PC-3 (cell line): ENCODE measurements at regions of chr1 and their contacts with region 1.

Region 1: DNA sequence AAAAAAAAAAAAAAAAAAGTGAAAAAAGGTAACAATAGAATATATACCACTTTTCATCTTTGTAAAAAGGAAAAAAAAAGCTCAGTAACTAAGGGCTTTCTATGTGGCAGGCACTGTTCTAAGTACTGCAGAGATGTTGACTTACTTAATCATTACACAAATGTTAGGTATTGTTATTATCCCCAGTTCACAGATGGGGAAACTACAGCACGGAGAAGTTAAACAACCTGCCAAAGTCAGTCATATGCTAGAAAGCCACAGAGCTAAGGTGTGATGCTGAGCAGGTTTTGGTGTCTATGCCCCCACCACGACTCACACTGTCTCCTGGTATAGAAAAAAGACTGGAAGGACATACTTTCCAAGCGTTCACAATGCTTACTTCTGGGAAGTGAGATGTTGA is 6.6 kb upstream of the PNRC2 start:
- DNase-seq: peak; percentile 62
- ATAC-seq: peak; percentile 55
- H3K4me3 ChIP-seq: no peak overlapping the region
- H3K27ac ChIP-seq: 0 out of 2 replicates have a peak overlapping the region, but pooled peaks have one; percentile 68
- H3K4me1 ChIP-seq: peaks cover 49% of the 10 kb centered on the region
- H3K27me3 ChIP-seq: no peaks in the 10 kb centered on the region
- CTCF ChIP-seq: no peak

Region 2: DNA sequence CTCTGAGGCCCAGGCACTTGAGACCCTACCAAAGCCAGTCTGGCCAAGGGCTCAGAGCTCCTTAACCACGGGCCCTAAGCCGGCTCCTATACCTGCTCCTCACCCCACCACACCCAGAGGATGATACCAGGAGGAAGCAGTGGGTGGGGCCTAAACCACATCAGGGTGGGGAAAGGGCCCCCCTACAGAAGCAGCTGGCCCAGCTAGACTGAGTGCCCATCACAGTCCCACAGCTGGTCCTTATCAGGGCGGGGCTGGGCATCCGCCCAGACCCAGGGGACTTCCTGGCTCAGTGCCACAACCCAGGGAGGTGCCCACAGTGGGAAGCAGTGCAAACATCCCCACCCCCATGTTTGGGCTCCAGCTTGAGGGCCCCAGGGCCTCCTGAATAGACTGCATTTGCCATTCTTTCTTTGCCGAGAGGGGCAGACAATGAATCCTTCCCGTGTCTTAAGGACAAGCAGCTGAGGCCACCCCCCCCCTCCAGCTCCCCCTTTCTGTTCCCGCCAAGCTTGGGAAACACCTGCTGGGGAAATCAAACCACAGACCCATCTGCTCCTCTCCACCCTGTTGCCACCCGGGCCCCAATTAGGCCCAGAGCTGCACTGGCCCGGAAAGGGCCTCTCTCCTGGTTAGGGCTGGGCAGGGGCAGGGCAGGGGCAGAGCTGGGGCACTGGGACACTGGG is 428.2 kb before region 1 on chr1:
- CTCF ChIA-PET with region 1: no interaction called
- POLR2A ChIA-PET with region 1: no interaction called
- intact Hi-C with region 1: no loop called
- DNase-seq: peak; percentile 22
- ATAC-seq: no peak
- H3K4me3 ChIP-seq: no peak overlapping the region
- H3K27ac ChIP-seq: peak overlapping the region; percentile 51
- H3K4me1 ChIP-seq: peaks cover 48% of the 10 kb centered on the region
- H3K27me3 ChIP-seq: no peaks in the 10 kb centered on the region
- CTCF ChIP-seq: no peak

Region 3: GRCh38 chr1:23908493-23909341 is 44.3 kb before region 1 on chr1:
- CTCF ChIA-PET with region 1: no interaction called
- POLR2A ChIA-PET with region 1: interaction called, 10 read pairs
- intact Hi-C with region 1: no loop called
- DNase-seq: no peak
- ATAC-seq: no peak
- H3K4me3 ChIP-seq: no peak overlapping the region
- H3K27ac ChIP-seq: no peak overlapping the region
- H3K4me1 ChIP-seq: peaks cover 12% of the 10 kb centered on the region
- H3K27me3 ChIP-seq: no peaks in the 10 kb centered on the region
- CTCF ChIP-seq: no peak

Region 4: GRCh38 chr1:23977187-23977853 is 24.3 kb after region 1 on chr1:
- CTCF ChIA-PET with region 1: no interaction called
- POLR2A ChIA-PET with region 1: no interaction called
- intact Hi-C with region 1: no loop called
- DNase-seq: no peak
- ATAC-seq: no peak
- H3K4me3 ChIP-seq: peak overlapping the region; percentile 94
- H3K27ac ChIP-seq: no peak overlapping the region
- H3K4me1 ChIP-seq: peaks cover 26% of the 10 kb centered on the region
- H3K27me3 ChIP-seq: no peaks in the 10 kb centered on the region
- CTCF ChIP-seq: no peak

Region 5: GRCh38 chr1:24027838-24028468 is 74.9 kb after region 1 on chr1:
- CTCF ChIA-PET with region 1: interaction called, 9 read pairs
- POLR2A ChIA-PET with region 1: interaction called, 10 read pairs
- intact Hi-C with region 1: no loop called
- DNase-seq: peak; percentile 74
- ATAC-seq: peak; percentile 85
- H3K4me3 ChIP-seq: no peak overlapping the region
- H3K27ac ChIP-seq: no peak overlapping the region
- H3K4me1 ChIP-seq: peaks cover 2% of the 10 kb centered on the region
- H3K27me3 ChIP-seq: no peaks in the 10 kb centered on the region
- CTCF ChIP-seq: peak; percentile 70